Transverse colon (tissue), 4 donors: ENCODE measurements at regions of chr11 and their contacts with region 1.

Region 1: GRCh38 chr11:9314291-9315036 is at the start of gene TMEM41B:
- DNase-seq: peak; percentile 98
- H3K4me3 ChIP-seq: peak within 1 kb of the TSS; percentile 94 to 100 (median 96)
- H3K27ac ChIP-seq: peak within 1 kb of the TSS; percentile 90 to 96 (median 92)
- H3K4me1 ChIP-seq: peaks cover 0 to 29% (median 16%) of the 10 kb centered on the region in 4 donors
- H3K27me3 ChIP-seq: no peaks in the 10 kb centered on the region
- CTCF ChIP-seq: no peak
- EP300 ChIP-seq: no peak
- POLR2A ChIP-seq: peak; percentile 88
- total RNA-seq, gene TMEM41B: 13.7 to 53.9 (median 51.8) TPM

Region 2: DNA sequence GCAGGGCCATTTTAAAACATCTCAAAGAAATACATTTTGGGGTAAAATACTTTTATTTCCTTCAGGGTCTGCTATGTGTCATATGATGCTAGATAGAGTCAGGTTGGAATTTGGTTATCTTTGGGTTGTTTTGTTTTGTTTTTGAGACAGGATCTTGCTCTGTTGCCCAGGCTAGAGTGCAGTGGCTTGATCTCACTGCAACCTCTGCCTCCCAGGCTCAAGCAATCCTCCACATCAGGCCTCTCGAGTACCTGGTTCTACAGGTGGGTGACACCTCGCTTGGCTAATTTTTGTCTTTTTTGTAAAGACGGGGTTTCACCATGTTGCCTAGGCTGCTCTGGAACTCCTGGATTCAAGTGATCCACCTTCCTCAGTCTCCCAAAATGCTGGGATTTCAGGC is 66.6 kb before region 1 on chr11:
- in situ Hi-C with region 1: no loop called
- intact Hi-C with region 1: no loop called
- DNase-seq: no peak
- H3K4me3 ChIP-seq: no peak overlapping the region
- H3K27ac ChIP-seq: no peak overlapping the region
- H3K4me1 ChIP-seq: peaks cover 0 to 12% (median 2%) of the 10 kb centered on the region in 4 donors
- H3K27me3 ChIP-seq: no peaks in the 10 kb centered on the region
- CTCF ChIP-seq: no peak
- EP300 ChIP-seq: no peak
- POLR2A ChIP-seq: no peak

Region 3: GRCh38 chr11:9347100-9347499 is 32.6 kb after region 1 on chr11:
- in situ Hi-C with region 1: no loop called
- intact Hi-C with region 1: no loop called
- DNase-seq: no peak
- H3K4me3 ChIP-seq: no peak overlapping the region
- H3K27ac ChIP-seq: no peak overlapping the region
- H3K4me1 ChIP-seq: no peaks in the 10 kb centered on the region
- H3K27me3 ChIP-seq: no peaks in the 10 kb centered on the region
- CTCF ChIP-seq: no peak
- EP300 ChIP-seq: no peak
- POLR2A ChIP-seq: no peak

Region 4: GRCh38 chr11:9384535-9385303 is 70.3 kb after region 1 on chr11 and contains the start of gene IPO7:
- in situ Hi-C with region 1: no loop called
- intact Hi-C with region 1: loop called (anchors 10 kb)
- DNase-seq: peak; percentile 92
- H3K4me3 ChIP-seq: peak within 1 kb of the TSS; percentile 60 to 93 (median 78)
- H3K27ac ChIP-seq: peak within 1 kb of the TSS; percentile 93 to 98 (median 97)
- H3K4me1 ChIP-seq: peaks cover 5 to 44% (median 28%) of the 10 kb centered on the region in 4 donors
- H3K27me3 ChIP-seq: no peaks in the 10 kb centered on the region
- CTCF ChIP-seq: peak in 3 of 5 experiments; percentile 7 to 41 (median 14)
- EP300 ChIP-seq: no peak
- POLR2A ChIP-seq: peak; percentile 85
- total RNA-seq, gene IPO7: 20.9 to 64.5 (median 44.6) TPM

Region 5: GRCh38 chr11:9575260-9576240 is 261.1 kb after region 1 on chr11:
- in situ Hi-C with region 1: no loop called
- intact Hi-C with region 1: no loop called
- DNase-seq: peak; percentile 74
- H3K4me3 ChIP-seq: peak overlapping the region; percentile 51 to 96 (median 90)
- H3K27ac ChIP-seq: peak overlapping the region; percentile 97 to 98 (median 98)
- H3K4me1 ChIP-seq: peaks cover 4 to 41% (median 22%) of the 10 kb centered on the region in 4 donors
- H3K27me3 ChIP-seq: no peaks in the 10 kb centered on the region
- CTCF ChIP-seq: no peak
- EP300 ChIP-seq: no peak
- POLR2A ChIP-seq: peak; percentile 87